ENCODE measurements at regions of chr4 and their contacts with region 1.

Region 1: GRCh38 chr4:101730291-101731117 is 60.0 kb upstream of the BANK1 start:
- DNase-seq: peak; percentile 78
- H3K4me3 ChIP-seq: no peak overlapping the region
- H3K27ac ChIP-seq: no peak overlapping the region
- H3K4me1 ChIP-seq: no peaks in the 10 kb centered on the region
- H3K27me3 ChIP-seq: no peaks in the 10 kb centered on the region
- CTCF ChIP-seq: peak; percentile 58 to 63
- POLR2A ChIP-seq: no peak

Region 2: DNA sequence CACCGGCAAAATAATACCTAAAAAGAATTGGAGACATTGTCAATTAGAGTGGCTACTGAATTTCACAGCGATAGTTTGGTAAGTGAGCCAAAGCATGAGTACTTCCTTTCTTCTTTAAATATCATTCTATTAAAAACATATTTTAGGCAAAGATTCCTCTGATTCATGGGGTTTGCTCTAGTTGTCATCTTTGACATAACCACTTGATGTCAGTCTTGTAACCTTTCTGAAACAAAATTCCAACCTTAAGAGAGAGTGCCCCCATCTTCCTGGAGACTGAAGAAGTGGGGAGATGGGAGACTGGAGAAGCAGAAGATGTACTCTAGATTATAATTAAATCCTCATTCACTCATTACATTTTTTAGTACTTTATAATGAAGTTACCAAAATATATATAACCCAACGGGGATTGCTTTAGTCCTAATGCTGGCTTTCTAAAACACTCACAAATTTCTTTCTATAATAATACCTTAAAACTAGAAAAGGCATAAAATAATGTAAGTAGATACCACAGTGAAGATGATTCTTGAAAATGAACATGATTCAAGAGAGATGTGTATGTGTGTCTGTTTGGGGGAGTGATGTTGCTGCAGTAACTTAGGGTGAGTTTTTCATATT is 1309.0 kb before region 1 on chr4:
- CTCF ChIA-PET with region 1: no interaction called
- POLR2A ChIA-PET with region 1: no interaction called
- dilution Hi-C with region 1: no loop called
- intact Hi-C with region 1: loop called (anchors 1 kb)
- DNase-seq: peak; percentile 73
- H3K4me3 ChIP-seq: no peak overlapping the region
- H3K27ac ChIP-seq: peak overlapping the region; percentile 43
- H3K4me1 ChIP-seq: peaks cover 18% of the 10 kb centered on the region
- H3K27me3 ChIP-seq: no peaks in the 10 kb centered on the region
- CTCF ChIP-seq: peak; percentile 30 to 44
- POLR2A ChIP-seq: no peak

Region 3: GRCh38 chr4:100907465-100908454 is 822.7 kb before region 1 on chr4:
- CTCF ChIA-PET with region 1: interaction called, 6 read pairs
- POLR2A ChIA-PET with region 1: no interaction called
- dilution Hi-C with region 1: no loop called
- intact Hi-C with region 1: loop called (anchors 1 kb)
- DNase-seq: peak; percentile 47
- H3K4me3 ChIP-seq: no peak overlapping the region
- H3K27ac ChIP-seq: no peak overlapping the region
- H3K4me1 ChIP-seq: no peaks in the 10 kb centered on the region
- H3K27me3 ChIP-seq: no peaks in the 10 kb centered on the region
- CTCF ChIP-seq: peak; percentile 21 to 40
- POLR2A ChIP-seq: no peak

Region 4: GRCh38 chr4:101187841-101188240 is 542.7 kb before region 1 on chr4:
- CTCF ChIA-PET with region 1: interaction called, 13 read pairs
- POLR2A ChIA-PET with region 1: no interaction called
- dilution Hi-C with region 1: no loop called
- intact Hi-C with region 1: loop called (anchors 1 kb)
- DNase-seq: peak; percentile 71
- H3K4me3 ChIP-seq: no peak overlapping the region
- H3K27ac ChIP-seq: no peak overlapping the region
- H3K4me1 ChIP-seq: peaks cover 15% of the 10 kb centered on the region
- H3K27me3 ChIP-seq: no peaks in the 10 kb centered on the region
- CTCF ChIP-seq: peak in 1 of 2 donors; percentile 15
- POLR2A ChIP-seq: no peak

Region 5: GRCh38 chr4:102139132-102139573 is 408.6 kb after region 1 on chr4:
- CTCF ChIA-PET with region 1: no interaction called
- POLR2A ChIA-PET with region 1: no interaction called
- dilution Hi-C with region 1: no loop called
- intact Hi-C with region 1: no loop called
- DNase-seq: peak; percentile 98
- H3K4me3 ChIP-seq: peak overlapping the region in 1 of 3 experiments; percentile 8
- H3K27ac ChIP-seq: peak overlapping the region; percentile 99
- H3K4me1 ChIP-seq: peaks cover 40% of the 10 kb centered on the region
- H3K27me3 ChIP-seq: no peaks in the 10 kb centered on the region
- CTCF ChIP-seq: no peak
- POLR2A ChIP-seq: peak; percentile 52

Region 6: GRCh38 chr4:102263011-102263787 is 532.7 kb after region 1 on chr4:
- CTCF ChIA-PET with region 1: interaction called, 10 read pairs
- POLR2A ChIA-PET with region 1: no interaction called
- dilution Hi-C with region 1: no loop called
- intact Hi-C with region 1: loop called (anchors 1 kb)
- DNase-seq: peak; percentile 64
- H3K4me3 ChIP-seq: no peak overlapping the region
- H3K27ac ChIP-seq: no peak overlapping the region
- H3K4me1 ChIP-seq: peaks cover 4% of the 10 kb centered on the region
- H3K27me3 ChIP-seq: no peaks in the 10 kb centered on the region
- CTCF ChIP-seq: peak; percentile 42 to 52
- POLR2A ChIP-seq: no peak

Measured in endothelial cell of umbilical vein (primary cell).